Posterior cingulate gyrus (tissue), 11 donors: ENCODE measurements at regions of chr16 and their contacts with region 1.

Region 1: GRCh38 chr16:4616047-4616811 is 1.5 kb upstream of the UBALD1 start:
- DNase-seq: peak; percentile 98 to 100 (median 99)

Region 2: DNA sequence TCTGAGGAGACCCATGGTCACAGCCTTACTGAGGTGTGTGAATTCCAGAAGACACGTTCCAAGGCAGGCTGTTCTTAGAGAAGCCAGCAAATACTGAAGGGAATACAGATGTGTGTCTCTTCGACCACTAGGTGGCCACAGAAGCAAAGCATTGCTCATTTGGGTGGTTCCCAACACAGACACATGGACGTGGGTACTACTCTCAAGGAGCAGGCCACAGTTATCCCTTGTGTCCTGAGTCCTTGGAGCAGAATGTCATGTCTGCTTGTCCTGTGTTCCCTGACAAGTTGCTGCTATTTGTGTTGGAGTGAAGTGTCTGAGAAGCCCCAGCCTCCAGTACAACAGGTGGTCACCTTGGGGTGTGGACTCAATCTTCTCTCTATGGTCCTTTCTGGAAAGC is 109.8 kb before region 1 on chr16:
- intact Hi-C with region 1: loop called (anchors 10 kb)
- DNase-seq: peak in 6 of 10 donors; percentile 64 to 94 (median 70)

Region 3: GRCh38 chr16:4538350-4539235 is 77.6 kb before region 1 on chr16 and contains the start of gene CDIP1:
- intact Hi-C with region 1: loop called (anchors 1 kb)
- DNase-seq: peak; percentile 96 to 99 (median 98)

Region 4: GRCh38 chr16:4693296-4693955 is 77.2 kb after region 1 on chr16 and contains the start of gene NUDT16L1:
- intact Hi-C with region 1: loop called (anchors 5 kb)
- DNase-seq: peak; percentile 89 to 100 (median 96)